ENCODE measurements at regions of chr1 and their contacts with region 1.

Region 1: DNA sequence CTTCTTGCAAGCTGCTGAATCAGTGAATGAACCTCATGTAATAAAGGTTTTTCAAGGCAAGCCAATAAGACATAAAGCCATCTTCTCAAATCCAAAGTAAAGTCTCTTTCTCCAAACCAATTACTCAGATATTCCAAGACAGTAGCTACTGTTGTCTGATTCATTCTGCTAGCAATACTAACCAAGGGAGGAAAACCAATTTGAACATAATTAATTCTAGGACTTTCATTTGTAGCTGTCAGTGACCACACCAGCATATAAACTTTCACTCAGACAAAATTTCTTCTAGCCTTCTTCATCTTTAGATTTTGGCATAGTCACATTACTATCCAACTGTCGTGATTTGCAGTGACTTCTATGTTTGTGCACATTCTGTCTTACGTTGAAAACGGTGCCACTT is 10.5 kb upstream of the INTS3 start:
- DNase-seq: no peak
- ATAC-seq: no peak
- H3K4me3 ChIP-seq: no peak overlapping the region
- H3K27ac ChIP-seq: no peak overlapping the region
- H3K4me1 ChIP-seq: no peaks in the 10 kb centered on the region
- H3K27me3 ChIP-seq: no peaks in the 10 kb centered on the region; the same call in 1 of the 2 replicates
- CTCF ChIP-seq: no peak
- POLR2A ChIP-seq: no peak
- RAD21 ChIP-seq: no peak

Region 2: GRCh38 chr1:153658400-153659174 is 58.7 kb before region 1 on chr1 and contains the start of gene SNAPIN:
- CTCF ChIA-PET with region 1: no interaction called
- POLR2A ChIA-PET with region 1: no interaction called
- dilution Hi-C with region 1: no loop called
- in situ Hi-C with region 1: no loop called
- intact Hi-C with region 1: no loop called
- DNase-seq: peak; percentile 80
- ATAC-seq: peak; percentile 99
- H3K4me3 ChIP-seq: peak within 1 kb of the TSS; percentile 94
- H3K27ac ChIP-seq: peak within 1 kb of the TSS; percentile 92
- H3K4me1 ChIP-seq: peaks cover 1% of the 10 kb centered on the region
- H3K27me3 ChIP-seq: no peaks in the 10 kb centered on the region
- CTCF ChIP-seq: peak; percentile 28; the same call in 1 of the 2 replicates
- POLR2A ChIP-seq: peak; percentile 42; the same call in 1 of the 2 replicates
- RAD21 ChIP-seq: no peak
- total RNA-seq, gene SNAPIN: 37.2 and 40.9 TPM in 2 replicates

Region 3: DNA sequence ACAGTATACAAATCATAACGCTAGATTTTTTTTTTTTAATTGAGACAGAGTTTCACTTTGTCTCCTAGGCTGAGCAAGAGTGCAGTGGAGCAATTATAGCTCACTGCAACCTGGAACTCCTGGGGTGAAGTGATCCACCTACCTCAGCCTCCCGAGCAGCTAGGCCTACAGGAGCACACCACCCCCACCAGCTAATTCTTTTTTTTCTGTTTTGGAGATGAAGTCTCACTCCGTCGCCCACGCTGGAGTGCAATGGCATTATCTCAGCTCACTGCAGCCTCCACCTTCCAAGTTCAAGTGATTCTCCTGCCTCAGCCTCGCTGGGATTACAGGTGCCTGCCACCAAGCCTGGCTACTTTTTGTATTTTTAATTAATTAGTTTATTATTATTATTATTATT is 17.6 kb before region 1 on chr1:
- CTCF ChIA-PET with region 1: no interaction called
- POLR2A ChIA-PET with region 1: no interaction called
- dilution Hi-C with region 1: no loop called
- in situ Hi-C with region 1: no loop called
- intact Hi-C with region 1: loop called (anchors 1 kb)
- DNase-seq: no peak
- ATAC-seq: no peak
- H3K4me3 ChIP-seq: no peak overlapping the region
- H3K27ac ChIP-seq: no peak overlapping the region
- H3K4me1 ChIP-seq: peaks cover 2% of the 10 kb centered on the region
- H3K27me3 ChIP-seq: 0 out of 2 replicates have a peak, but pooled peaks cover 2% of the 10 kb centered on the region
- CTCF ChIP-seq: no peak
- POLR2A ChIP-seq: no peak
- RAD21 ChIP-seq: no peak

Region 4: GRCh38 chr1:153727463-153728304 is 10.4 kb after region 1 on chr1 and contains the start of gene INTS3:
- CTCF ChIA-PET with region 1: no interaction called
- POLR2A ChIA-PET with region 1: interaction called, 11 read pairs
- dilution Hi-C with region 1: no loop called
- in situ Hi-C with region 1: no loop called
- intact Hi-C with region 1: no loop called
- DNase-seq: peak; percentile 100
- ATAC-seq: peak; percentile 100
- H3K4me3 ChIP-seq: peak within 1 kb of the TSS; percentile 74
- H3K27ac ChIP-seq: peak within 1 kb of the TSS; percentile 95
- H3K4me1 ChIP-seq: peaks cover 3% of the 10 kb centered on the region; the same call in 1 of the 2 replicates
- H3K27me3 ChIP-seq: no peaks in the 10 kb centered on the region
- CTCF ChIP-seq: no peak
- POLR2A ChIP-seq: peak; percentile 52; the same call in 1 of the 2 replicates
- RAD21 ChIP-seq: no peak
- total RNA-seq, gene INTS3: 28.1 and 33.5 TPM in 2 replicates

Measured in IMR-90 (cell line).